Ovary (tissue), 10 donors: ENCODE measurements at regions of chr17 and their contacts with region 1.

Region 1: DNA sequence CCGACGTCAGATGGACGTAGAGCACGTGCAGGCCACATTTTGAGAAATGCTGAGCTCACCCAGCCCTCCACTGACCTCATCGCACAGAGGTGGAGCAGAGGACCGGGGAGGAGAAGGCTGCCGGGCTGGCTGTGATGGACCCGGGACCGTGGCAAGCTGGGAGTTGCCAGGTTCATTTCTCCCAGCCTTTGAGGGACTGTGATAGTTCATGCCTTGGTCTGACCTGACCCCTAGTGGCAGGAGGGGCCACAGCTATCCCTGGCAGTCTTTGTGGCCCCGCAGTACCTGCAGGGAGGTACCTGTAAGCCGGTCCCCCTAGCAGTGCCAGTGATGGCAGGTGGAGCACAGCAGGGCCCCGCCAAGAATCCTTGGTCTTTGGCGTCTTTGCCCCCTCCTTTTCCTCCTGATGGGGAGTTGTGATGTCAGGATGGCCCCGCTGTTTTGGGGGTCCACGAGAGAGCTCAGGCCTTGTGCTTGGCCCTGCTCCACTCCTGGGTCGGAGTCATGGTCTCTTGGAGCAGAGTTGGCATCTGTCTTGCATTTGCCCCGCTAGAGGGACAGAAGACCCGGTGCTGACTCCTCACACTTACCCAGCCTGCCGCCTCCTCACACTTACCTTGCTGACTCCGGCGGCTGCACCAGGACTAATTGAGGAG is 50.4 kb downstream of the OR1D5 start:
- DNase-seq: peak; percentile 53 to 74 (median 69)
- H3K4me3 ChIP-seq: no peak overlapping the region
- H3K27ac ChIP-seq: no peak overlapping the region
- H3K4me1 ChIP-seq: no peaks in the 10 kb centered on the region
- H3K27me3 ChIP-seq: no peaks in the 10 kb centered on the region
- CTCF ChIP-seq: peak; percentile 46 to 65 (median 59)
- EP300 ChIP-seq: no peak
- POLR2A ChIP-seq: no peak

Region 2: GRCh38 chr17:2828397-2829038 is 184.5 kb before region 1 on chr17:
- intact Hi-C with region 1: loop called (anchors 2 to 10 kb)
- DNase-seq: peak; percentile 52 to 82 (median 67)
- H3K4me3 ChIP-seq: no peak overlapping the region
- H3K27ac ChIP-seq: no peak overlapping the region
- H3K4me1 ChIP-seq: peaks cover 2% of the 10 kb centered on the region
- H3K27me3 ChIP-seq: no peaks in the 10 kb centered on the region
- CTCF ChIP-seq: peak; percentile 59 to 80 (median 74)
- EP300 ChIP-seq: no peak
- POLR2A ChIP-seq: no peak

Region 3: DNA sequence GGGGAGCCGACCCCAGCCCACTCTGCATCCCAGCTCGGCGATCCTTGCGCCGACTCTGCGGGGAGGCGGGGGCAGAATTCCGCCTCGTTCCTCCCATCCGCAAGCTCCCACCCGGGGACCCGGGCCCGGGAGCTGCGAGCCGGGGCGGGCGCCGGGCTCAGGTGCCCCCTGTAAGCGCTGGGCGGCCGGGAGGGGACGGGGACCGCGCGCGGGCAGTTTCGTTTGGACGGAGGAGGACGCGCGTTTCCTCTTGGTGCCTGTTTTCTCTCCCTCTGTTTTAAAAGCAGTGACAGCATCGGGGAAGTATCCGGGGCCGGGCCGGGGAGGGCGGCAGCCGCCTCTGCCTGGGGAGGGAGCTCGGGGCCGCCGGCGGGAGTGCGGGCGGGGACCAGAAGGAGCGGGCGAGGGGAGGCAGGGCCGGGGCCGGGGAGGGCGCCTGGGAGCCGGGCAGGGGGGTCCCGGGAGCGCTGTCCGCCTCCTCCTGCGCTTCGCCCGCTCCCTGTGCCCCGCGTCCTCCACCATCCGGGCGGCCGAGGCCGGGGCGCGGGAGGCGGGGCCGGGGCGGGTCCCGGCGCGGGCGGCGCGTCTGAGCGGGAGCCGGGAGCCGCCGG is 159.8 kb before region 1 on chr17:
- intact Hi-C with region 1: loop called in 2 of 4 experiments (anchors 5 to 10 kb)
- DNase-seq: peak in 4 of 5 donors; percentile 19 to 48 (median 35)
- H3K4me3 ChIP-seq: peak overlapping the region; percentile 43
- H3K27ac ChIP-seq: no peak overlapping the region
- H3K4me1 ChIP-seq: peaks cover 1% of the 10 kb centered on the region
- H3K27me3 ChIP-seq: no peaks in the 10 kb centered on the region
- CTCF ChIP-seq: no peak
- EP300 ChIP-seq: no peak
- POLR2A ChIP-seq: no peak

Region 4: GRCh38 chr17:2883567-2884101 is 129.4 kb before region 1 on chr17:
- intact Hi-C with region 1: no loop called
- DNase-seq: no peak
- H3K4me3 ChIP-seq: no peak overlapping the region
- H3K27ac ChIP-seq: no peak overlapping the region
- H3K4me1 ChIP-seq: no peaks in the 10 kb centered on the region
- H3K27me3 ChIP-seq: no peaks in the 10 kb centered on the region
- CTCF ChIP-seq: no peak
- EP300 ChIP-seq: no peak
- POLR2A ChIP-seq: no peak